ENCODE measurements at regions of chr5 and their contacts with region 1.

Region 1: DNA sequence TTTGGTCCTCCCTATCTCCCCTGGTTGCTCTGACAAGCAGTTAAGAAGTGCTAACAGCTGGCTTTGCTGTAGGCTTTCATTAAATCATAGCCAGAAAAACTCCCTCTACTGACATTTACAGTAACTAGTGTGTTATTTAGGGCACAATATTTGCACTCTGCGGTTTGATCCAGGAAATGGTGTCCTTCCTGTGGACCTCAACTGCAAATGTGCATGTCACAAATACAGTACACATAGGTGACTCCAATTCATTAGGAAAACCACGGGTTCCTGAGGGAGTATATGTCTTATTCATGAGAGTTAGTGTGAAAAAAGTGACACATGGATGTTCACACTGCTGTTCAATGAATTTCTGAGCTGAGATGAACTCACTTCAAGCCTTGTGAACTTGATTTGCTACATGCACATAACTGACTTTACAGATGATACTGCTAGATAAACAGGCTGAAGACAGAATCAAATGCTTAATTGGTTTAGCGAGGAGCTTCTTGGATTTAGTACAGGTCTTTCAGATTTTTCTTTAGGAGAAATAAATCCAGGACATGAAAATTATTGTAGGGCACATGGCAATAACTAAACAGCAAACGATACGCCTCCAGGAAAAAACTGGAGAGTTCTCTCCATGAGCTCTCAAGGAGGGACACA is 281.5 kb downstream of the EFNA5 start:
- DNase-seq: peak; percentile 67
- H3K4me3 Mint-ChIP-seq: no peak overlapping the region
- H3K27ac Mint-ChIP-seq: peak overlapping the region; percentile 75
- H3K4me1 Mint-ChIP-seq: peaks cover 45% of the 10 kb centered on the region
- H3K27me3 Mint-ChIP-seq: no peaks in the 10 kb centered on the region
- CTCF ChIP-seq: no peak

Region 2: DNA sequence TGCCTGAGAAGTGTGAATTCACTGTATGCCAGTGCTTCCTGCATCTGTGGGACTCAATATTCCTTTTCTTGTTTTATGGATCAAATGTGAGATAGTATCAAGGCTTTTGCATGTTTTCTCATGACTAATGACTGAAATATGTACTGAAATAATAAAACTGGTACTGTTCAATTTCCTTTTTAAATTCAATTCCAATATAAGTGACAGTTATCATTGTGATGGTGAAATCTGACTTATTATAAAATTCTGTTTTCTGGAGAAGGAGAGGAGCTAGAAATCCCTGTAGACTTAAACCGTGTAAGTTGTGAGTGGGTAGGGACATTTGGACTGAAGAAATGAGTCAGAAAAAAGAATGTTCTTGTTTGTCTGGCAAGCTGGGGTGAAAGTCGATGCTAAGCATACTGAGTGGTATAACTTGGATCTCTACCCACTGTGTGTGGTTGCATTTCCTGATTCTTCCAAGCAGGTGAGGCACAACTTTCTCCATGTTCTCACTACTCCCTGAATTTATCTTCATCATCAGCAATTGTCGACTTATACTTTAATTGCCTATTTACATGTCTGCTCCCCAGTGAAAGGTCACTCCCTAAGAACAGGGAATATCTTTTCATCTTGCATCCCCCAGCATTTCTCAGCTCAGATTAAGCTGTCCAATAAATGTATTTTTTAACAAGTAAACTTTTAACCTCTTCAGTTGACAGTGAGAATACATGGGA is 36.4 kb after region 1 on chr5:
- CTCF ChIA-PET with region 1: interaction called, 6 read pairs
- POLR2A ChIA-PET with region 1: interaction called, 18 read pairs
- intact Hi-C with region 1: loop called (anchors 2 kb)
- DNase-seq: peak; percentile 82
- H3K4me3 Mint-ChIP-seq: peak overlapping the region; percentile 40
- H3K27ac Mint-ChIP-seq: peak overlapping the region; percentile 88
- H3K4me1 Mint-ChIP-seq: peaks cover 39% of the 10 kb centered on the region
- H3K27me3 Mint-ChIP-seq: no peaks in the 10 kb centered on the region
- CTCF ChIP-seq: no peak

Region 3: DNA sequence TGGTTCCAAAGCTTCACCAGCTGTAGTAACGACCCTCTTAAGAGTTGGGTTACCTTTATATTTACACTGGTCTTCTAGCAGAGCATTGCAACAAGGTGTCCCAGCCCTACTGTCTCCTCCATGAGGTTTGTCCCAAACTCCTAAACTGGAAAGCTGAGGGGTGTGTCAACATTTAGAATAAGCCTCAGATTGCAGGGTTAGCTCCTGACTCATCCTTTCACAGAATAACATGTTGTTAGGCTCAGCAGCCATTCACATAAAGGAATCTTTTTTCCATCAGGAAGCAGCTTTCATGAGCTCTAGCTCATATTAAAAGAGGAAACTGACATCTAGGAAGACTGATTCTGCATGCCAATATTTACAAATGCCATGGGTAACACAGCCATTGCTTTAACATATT is 42.7 kb after region 1 on chr5:
- CTCF ChIA-PET with region 1: interaction called, 3 read pairs
- POLR2A ChIA-PET with region 1: interaction called, 9 read pairs
- intact Hi-C with region 1: loop called (anchors 2 kb)
- DNase-seq: peak; percentile 76
- H3K4me3 Mint-ChIP-seq: peak overlapping the region; percentile 11
- H3K27ac Mint-ChIP-seq: peak overlapping the region; percentile 79
- H3K4me1 Mint-ChIP-seq: peaks cover 49% of the 10 kb centered on the region
- H3K27me3 Mint-ChIP-seq: no peaks in the 10 kb centered on the region
- CTCF ChIP-seq: no peak